Activated B cell treated with CpG ODN at 0.5 μM for 24 hours (primary cell): ENCODE measurements at regions of chr17 and their contacts with region 1.

Region 1: DNA sequence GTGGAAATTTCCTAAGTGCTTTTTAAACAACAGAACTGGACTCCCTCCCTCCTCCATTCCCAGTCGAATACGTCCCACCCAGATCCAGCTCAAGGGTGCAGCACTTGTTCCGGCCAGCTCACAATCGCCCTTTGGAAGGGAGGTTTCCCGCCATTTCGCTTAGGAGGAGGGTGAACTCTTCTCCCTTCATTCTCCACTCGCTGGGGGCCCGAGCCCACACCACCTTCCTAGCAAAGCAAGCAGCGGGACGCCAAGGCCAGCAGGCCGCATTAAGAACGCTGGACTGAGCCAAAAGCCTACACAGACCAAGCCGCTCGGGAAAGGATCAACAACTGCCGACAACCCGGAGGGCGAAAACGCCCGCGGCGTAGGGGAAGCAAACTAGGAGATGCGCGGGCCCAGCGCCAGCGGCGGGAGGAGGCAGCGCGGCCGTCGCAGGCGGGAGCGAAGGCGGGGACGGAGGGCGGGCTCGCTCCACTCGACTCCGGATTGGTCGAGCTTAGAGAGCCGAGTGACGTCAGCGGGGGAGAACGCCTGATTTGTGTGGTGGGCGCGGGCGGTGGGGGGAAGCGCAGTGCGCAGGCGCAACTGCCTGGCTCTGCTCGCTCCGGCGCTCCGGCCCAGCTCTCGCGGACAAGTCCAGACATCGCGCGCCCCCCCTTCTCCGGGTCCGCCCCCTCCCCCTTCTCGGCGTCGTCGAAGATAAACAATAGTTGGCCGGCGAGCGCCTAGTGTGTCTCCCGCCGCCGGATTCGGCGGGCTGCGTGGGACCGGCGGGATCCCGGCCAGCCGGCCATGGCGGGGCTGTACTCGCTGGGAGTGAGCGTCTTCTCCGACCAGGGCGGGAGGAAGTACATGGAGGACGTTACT is at the start of gene PPM1D:
- DNase-seq: peak; percentile 96
- ATAC-seq: peak; percentile 93
- H3K4me3 Mint-ChIP-seq: peak within 1 kb of the TSS; percentile 98
- H3K27ac Mint-ChIP-seq: peak within 1 kb of the TSS; percentile 96
- H3K4me1 Mint-ChIP-seq: peaks cover 48% of the 10 kb centered on the region
- H3K27me3 Mint-ChIP-seq: no peaks in the 10 kb centered on the region
- CTCF ChIP-seq: no peak
- total RNA-seq, gene PPM1D: 12.9 and 13.3 TPM in 2 replicates

Region 2: GRCh38 chr17:59892924-59893676 is 706.8 kb before region 1 on chr17 and contains the starts of genes RPS6KB1 and TUBD1:
- CTCF ChIA-PET with region 1: no interaction called
- POLR2A ChIA-PET with region 1: interaction called, 3 read pairs
- intact Hi-C with region 1: loop called (anchors 5 kb)
- DNase-seq: peak; percentile 86
- ATAC-seq: peak; percentile 91
- H3K4me3 Mint-ChIP-seq: peak within 1 kb of the TSS; percentile 99
- H3K27ac Mint-ChIP-seq: peak within 1 kb of the TSS; percentile 98
- H3K4me1 Mint-ChIP-seq: peaks cover 44% of the 10 kb centered on the region
- H3K27me3 Mint-ChIP-seq: no peaks in the 10 kb centered on the region
- CTCF ChIP-seq: no peak
- total RNA-seq, gene RPS6KB1: 57.7 and 63.0 TPM in 2 replicates
- total RNA-seq, gene TUBD1: 10.5 and 15.1 TPM in 2 replicates

Region 3: GRCh38 chr17:60398227-60398959 is 201.5 kb before region 1 on chr17:
- CTCF ChIA-PET with region 1: interaction called, 3 read pairs
- POLR2A ChIA-PET with region 1: interaction called, 4 read pairs
- intact Hi-C with region 1: loop called (anchors 2 kb)
- DNase-seq: peak; percentile 36
- ATAC-seq: peak; percentile 95
- H3K4me3 Mint-ChIP-seq: peak overlapping the region; percentile 55
- H3K27ac Mint-ChIP-seq: peak overlapping the region; percentile 64
- H3K4me1 Mint-ChIP-seq: peaks cover 74% of the 10 kb centered on the region
- H3K27me3 Mint-ChIP-seq: no peaks in the 10 kb centered on the region
- CTCF ChIP-seq: no peak

Region 4: GRCh38 chr17:60525685-60526514 is 74.0 kb before region 1 on chr17 and contains the start of gene APPBP2:
- CTCF ChIA-PET with region 1: no interaction called
- POLR2A ChIA-PET with region 1: no interaction called
- intact Hi-C with region 1: loop called (anchors 1 kb)
- DNase-seq: peak; percentile 76
- ATAC-seq: peak; percentile 84
- H3K4me3 Mint-ChIP-seq: peak within 1 kb of the TSS; percentile 96
- H3K27ac Mint-ChIP-seq: peak within 1 kb of the TSS; percentile 93
- H3K4me1 Mint-ChIP-seq: peaks cover 42% of the 10 kb centered on the region
- H3K27me3 Mint-ChIP-seq: no peaks in the 10 kb centered on the region
- CTCF ChIP-seq: no peak
- total RNA-seq, gene APPBP2: 25.5 and 29.9 TPM in 2 replicates

Region 5: GRCh38 chr17:60639019-60639330 is 39.1 kb after region 1 on chr17:
- CTCF ChIA-PET with region 1: no interaction called
- POLR2A ChIA-PET with region 1: no interaction called
- intact Hi-C with region 1: loop called (anchors 1 kb)
- DNase-seq: no peak
- ATAC-seq: no peak
- H3K4me3 Mint-ChIP-seq: no peak overlapping the region
- H3K27ac Mint-ChIP-seq: no peak overlapping the region
- H3K4me1 Mint-ChIP-seq: peaks cover 7% of the 10 kb centered on the region
- H3K27me3 Mint-ChIP-seq: no peaks in the 10 kb centered on the region
- CTCF ChIP-seq: no peak